ENCODE measurements at regions of chr1 and their contacts with region 1.

Region 1: DNA sequence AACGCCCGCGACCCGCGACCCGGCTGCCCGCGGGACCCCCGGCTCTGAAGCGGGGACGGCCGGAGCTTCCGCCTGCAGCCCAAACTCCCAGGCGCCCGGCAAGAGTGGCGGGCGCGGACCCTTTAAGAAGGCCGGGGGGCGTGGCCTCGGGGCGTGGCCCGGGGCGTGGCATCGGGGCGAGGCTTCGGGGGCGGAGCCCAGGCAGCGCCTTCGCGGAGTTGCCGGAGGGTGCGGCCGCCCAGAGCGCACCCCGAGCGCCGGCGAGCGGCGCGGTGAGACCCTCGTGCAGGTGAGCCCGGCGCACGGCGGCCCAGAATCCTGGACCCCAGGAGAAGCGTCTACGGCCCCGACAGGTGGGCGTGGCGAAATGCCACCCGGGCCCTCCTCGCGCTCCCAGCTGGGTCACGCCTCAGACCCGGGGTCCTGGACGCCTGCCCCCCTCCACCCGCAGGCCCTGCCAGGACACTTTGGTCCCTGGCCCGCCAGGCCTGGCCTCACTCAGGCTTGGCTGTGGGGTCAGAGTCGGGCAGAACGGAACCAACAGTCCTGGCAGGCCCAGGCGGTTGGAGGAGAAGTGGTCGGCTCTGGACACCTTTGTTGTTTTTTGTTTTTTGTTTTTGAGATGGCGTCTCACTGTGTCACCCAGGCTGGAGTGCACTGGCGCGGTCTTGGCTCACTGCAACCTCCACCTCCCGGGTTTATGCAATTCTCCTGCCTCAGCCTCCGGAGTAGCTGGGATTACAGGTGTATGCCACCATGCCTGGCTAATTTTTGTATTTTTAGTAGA is 14.4 kb downstream of the RNF223 start:
- DNase-seq: peak; percentile 97
- H3K4me3 Mint-ChIP-seq: peak overlapping the region; percentile 83
- H3K27ac Mint-ChIP-seq: peak overlapping the region; percentile 15
- H3K4me1 Mint-ChIP-seq: peaks cover 23% of the 10 kb centered on the region
- H3K27me3 Mint-ChIP-seq: peaks cover 19% of the 10 kb centered on the region

Region 2: GRCh38 chr1:966611-967300 is 92.9 kb before region 1 on chr1:
- intact Hi-C with region 1: no loop called
- DNase-seq: peak; percentile 93
- H3K4me3 Mint-ChIP-seq: peak overlapping the region; percentile 86
- H3K27ac Mint-ChIP-seq: peak overlapping the region; percentile 85
- H3K4me1 Mint-ChIP-seq: peaks cover 7% of the 10 kb centered on the region
- H3K27me3 Mint-ChIP-seq: peaks cover 10% of the 10 kb centered on the region

Region 3: GRCh38 chr1:983799-984473 is 75.8 kb before region 1 on chr1:
- intact Hi-C with region 1: loop called (anchors 1 kb)
- DNase-seq: peak; percentile 89
- H3K4me3 Mint-ChIP-seq: no peak overlapping the region
- H3K27ac Mint-ChIP-seq: no peak overlapping the region
- H3K4me1 Mint-ChIP-seq: no peaks in the 10 kb centered on the region
- H3K27me3 Mint-ChIP-seq: peaks cover 23% of the 10 kb centered on the region

Region 4: GRCh38 chr1:999725-1000356 is 59.8 kb before region 1 on chr1 and contains the start of gene HES4:
- intact Hi-C with region 1: loop called (anchors 5 kb)
- DNase-seq: peak; percentile 90
- H3K4me3 Mint-ChIP-seq: peak within 1 kb of the TSS; percentile 66
- H3K27ac Mint-ChIP-seq: peak within 1 kb of the TSS; percentile 89
- H3K4me1 Mint-ChIP-seq: peaks cover 9% of the 10 kb centered on the region
- H3K27me3 Mint-ChIP-seq: peaks cover 35% of the 10 kb centered on the region
- total RNA-seq, gene HES4: 2.8 and 5.0 TPM in 2 replicates

Region 5: DNA sequence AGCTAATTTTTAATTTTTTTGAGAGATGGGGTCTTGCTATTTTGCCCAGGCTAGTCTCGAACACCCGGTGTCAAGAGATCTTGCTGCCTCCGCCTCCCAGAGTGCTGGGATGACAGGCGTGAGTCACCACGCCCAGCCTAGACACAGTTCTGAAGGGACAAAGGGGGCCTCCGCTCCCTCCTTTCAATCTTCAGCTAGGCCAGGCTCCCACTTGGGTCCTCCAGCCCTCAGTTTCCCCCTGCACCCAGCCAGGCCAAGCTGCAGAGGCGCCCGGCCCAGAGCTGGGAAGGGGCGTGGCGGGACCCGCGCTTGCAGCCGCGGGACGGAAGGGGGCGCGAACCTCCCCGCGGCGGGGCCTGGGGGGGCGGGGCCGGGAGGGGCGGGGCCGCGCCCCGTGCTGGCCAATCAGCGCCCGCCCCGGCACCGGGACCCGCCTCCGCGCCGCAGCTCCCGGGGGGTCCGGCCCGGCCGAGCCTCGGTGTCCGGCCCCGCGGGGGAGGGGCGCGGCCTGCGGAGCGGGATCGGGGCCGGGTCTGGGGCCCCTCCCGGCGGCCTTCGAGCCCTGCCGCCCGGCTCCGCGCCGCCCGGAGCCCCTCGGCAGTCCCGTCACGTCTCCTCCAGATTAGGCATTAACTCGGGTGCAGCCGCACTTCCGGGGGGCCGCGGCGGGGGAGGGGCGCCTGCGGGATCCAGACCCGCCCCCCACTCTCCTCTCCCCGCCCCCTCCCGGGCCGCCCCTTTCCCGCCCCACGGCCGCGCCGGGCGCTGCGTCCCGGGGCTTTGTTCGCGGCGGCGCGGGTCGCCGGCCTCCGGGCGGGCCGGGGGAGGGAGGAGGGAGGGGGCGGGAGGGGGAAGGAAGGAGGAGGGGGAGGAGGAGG is 40.3 kb before region 1 on chr1:
- intact Hi-C with region 1: loop called (anchors 5 kb)
- DNase-seq: peak; percentile 94
- H3K4me3 Mint-ChIP-seq: peak overlapping the region; percentile 73
- H3K27ac Mint-ChIP-seq: no peak overlapping the region
- H3K4me1 Mint-ChIP-seq: peaks cover 26% of the 10 kb centered on the region
- H3K27me3 Mint-ChIP-seq: peaks cover 7% of the 10 kb centered on the region

Region 6: DNA sequence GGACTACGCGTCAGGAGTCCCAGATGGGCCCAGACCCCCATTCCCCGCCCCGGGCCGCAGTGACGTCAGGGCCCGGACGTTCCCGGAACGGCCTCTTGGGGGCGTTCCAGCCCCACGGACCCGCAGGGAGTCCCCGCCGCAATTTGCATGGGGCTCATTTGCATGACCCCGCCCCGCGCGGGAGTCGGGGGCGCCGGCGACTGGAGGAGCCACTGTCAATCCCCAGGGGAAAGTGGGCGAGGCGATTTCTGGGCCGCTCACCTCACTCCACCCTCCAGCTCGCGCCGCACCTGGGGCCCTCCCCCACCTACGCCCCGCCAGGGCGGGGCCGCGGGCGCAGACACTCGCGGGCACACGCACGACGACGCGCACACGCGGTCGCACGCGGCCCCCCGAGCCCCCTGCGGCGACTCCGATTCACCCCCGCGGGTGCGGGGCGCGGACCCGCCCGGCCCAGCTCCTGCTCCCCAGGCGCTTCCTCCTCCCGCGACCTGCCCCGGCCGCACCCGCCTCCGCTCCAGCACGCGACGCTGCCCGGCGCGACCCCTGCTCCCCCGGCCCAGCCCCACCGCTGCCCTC is 26.6 kb before region 1 on chr1:
- intact Hi-C with region 1: loop called (anchors 1 kb)
- DNase-seq: peak; percentile 97
- H3K4me3 Mint-ChIP-seq: peak overlapping the region; percentile 51
- H3K27ac Mint-ChIP-seq: no peak overlapping the region
- H3K4me1 Mint-ChIP-seq: peaks cover 5% of the 10 kb centered on the region
- H3K27me3 Mint-ChIP-seq: peaks cover 11% of the 10 kb centered on the region

Region 7: DNA sequence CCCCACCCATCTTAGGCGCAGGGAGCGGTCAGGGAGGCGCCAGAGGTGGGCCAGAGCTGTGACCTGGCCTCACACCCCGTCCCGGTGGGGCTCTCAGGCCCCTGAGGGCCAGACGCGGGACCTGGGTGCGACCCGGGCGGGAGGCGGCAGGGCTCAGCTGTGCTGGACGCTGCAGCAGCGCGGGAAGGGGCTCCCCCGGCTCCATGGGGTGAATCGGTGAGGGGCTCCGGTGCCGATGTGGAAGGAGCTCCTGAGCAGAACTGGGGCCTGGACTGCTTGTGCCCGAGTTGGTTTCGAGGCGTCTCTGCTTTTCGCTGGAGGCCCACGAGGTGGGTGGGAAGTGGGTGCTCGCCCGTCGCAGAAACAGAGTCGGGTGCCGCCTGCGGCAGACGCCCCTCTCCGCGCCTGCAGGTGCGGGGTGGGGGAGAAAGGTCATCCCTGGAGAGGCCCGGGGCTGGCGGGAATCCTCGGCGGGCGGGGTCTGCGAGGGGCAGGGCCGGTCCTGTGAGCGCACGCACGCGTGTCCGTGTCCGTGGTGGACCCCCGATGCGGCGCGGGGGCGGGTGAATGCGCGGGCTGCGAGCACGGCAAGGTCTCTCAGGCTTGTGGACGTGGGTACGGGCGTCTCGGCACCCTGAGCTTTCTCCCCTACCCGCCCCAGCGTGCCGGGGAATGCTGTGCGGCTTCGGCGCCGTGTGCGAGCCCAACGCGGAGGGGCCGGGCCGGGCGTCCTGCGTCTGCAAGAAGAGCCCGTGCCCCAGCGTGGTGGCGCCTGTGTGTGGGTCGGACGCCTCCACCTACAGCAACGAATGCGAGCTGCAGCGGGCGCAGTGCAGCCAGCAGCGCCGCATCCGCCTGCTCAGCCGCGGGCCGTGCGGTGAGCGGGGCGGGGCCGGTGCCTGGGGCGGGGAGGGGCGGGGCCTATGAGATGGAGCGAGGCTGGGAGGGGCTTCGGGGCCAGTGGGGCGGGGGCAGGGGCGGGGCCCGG is 19.4 kb before region 1 on chr1:
- intact Hi-C with region 1: loop called (anchors 2 kb)
- DNase-seq: peak; percentile 94
- H3K4me3 Mint-ChIP-seq: peak overlapping the region; percentile 73
- H3K27ac Mint-ChIP-seq: peak overlapping the region; percentile 39
- H3K4me1 Mint-ChIP-seq: peaks cover 13% of the 10 kb centered on the region
- H3K27me3 Mint-ChIP-seq: peaks cover 20% of the 10 kb centered on the region

Region 8: GRCh38 chr1:1307908-1308755 is 248.4 kb after region 1 on chr1 and contains the starts of genes ACAP3 and PUSL1:
- intact Hi-C with region 1: loop called (anchors 5 kb)
- DNase-seq: peak; percentile 96
- H3K4me3 Mint-ChIP-seq: peak within 1 kb of the TSS; percentile 88
- H3K27ac Mint-ChIP-seq: peak within 1 kb of the TSS; percentile 90
- H3K4me1 Mint-ChIP-seq: peaks cover 18% of the 10 kb centered on the region
- H3K27me3 Mint-ChIP-seq: no peaks in the 10 kb centered on the region
- total RNA-seq, gene ACAP3: 54.1 and 55.7 TPM in 2 replicates
- total RNA-seq, gene PUSL1: 33.4 and 35.2 TPM in 2 replicates

Measured in activated CD4-positive, alpha-beta T cell treated with anti-CD3 and anti-CD28 coated beads, Interleukin-2, amount 10 ng/mL, durations not matched to agents 24 days and 14 days (primary cell).